Right cardiac atrium (tissue), 5 donors: ENCODE measurements at regions of chr14 and their contacts with region 1.

Region 1: GRCh38 chr14:34671716-34672115 is 41.8 kb upstream of the SNX6 start:
- DNase-seq: no peak
- ATAC-seq: no peak
- H3K4me3 ChIP-seq: no peak overlapping the region
- H3K27ac ChIP-seq: no peak overlapping the region
- H3K4me1 ChIP-seq: no peaks in the 10 kb centered on the region
- H3K27me3 ChIP-seq: no peaks in the 10 kb centered on the region

Region 2: GRCh38 chr14:34522496-34522895 is 149.2 kb before region 1 on chr14:
- intact Hi-C with region 1: no loop called
- DNase-seq: no peak
- ATAC-seq: no peak
- H3K4me3 ChIP-seq: no peak overlapping the region
- H3K27ac ChIP-seq: no peak overlapping the region
- H3K4me1 ChIP-seq: no peaks in the 10 kb centered on the region
- H3K27me3 ChIP-seq: no peaks in the 10 kb centered on the region

Region 3: DNA sequence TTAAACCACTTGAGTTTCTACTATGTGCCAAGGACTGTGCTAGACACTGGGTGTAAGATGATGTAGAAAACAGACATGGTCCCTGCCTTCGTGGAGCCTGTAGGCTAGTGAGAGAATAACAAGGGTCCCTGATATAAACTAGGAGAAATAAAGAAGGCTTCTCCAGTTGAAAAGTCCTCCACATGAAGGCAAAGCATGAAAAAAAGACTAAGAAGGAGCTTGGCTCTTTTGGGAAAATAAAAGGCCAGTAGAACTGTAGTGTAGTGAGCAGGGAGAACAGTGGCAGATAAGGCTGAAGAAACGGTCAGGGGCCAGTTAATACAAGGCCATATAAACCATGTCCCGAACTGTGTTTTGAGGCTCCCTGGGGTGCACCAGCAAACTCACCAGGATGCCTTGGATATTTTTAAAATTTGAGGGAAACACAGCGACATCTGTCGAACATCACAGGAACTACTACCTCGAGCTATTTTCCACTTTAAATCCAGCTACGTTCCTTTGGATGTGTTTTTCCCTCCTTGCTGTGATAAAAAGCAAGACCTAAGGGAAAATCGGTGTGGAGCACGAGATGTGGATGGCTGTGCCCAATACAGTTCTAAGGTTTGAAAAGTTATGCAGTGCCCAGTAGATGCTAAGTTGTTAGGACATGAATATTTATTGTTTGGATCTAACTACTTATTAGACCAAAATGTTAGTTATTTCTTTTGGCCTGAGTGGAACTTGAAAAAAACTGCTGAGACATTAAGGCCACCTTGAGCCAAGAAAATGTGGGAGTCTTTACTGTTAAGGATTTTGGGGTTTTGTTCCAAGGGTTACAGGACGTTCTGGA is 51.2 kb after region 1 on chr14:
- intact Hi-C with region 1: loop called (anchors 2 to 5 kb)
- DNase-seq: peak in 1 of 3 donors; percentile 65
- ATAC-seq: peak; percentile 57 to 80
- H3K4me3 ChIP-seq: no peak overlapping the region
- H3K27ac ChIP-seq: no peak overlapping the region
- H3K4me1 ChIP-seq: no peaks in the 10 kb centered on the region
- H3K27me3 ChIP-seq: no peaks in the 10 kb centered on the region